ENCODE measurements at regions of chr1 and their contacts with region 1.

Region 1: GRCh38 chr1:89843281-89844121 is 22.7 kb downstream of the LRRC8D start:
- DNase-seq: peak; percentile 48 to 76
- ATAC-seq: peak; percentile 91 to 96 (median 94)
- H3K4me3 ChIP-seq: peak overlapping the region; percentile 58 to 86 (median 73)
- H3K27ac ChIP-seq: peak overlapping the region; percentile 15 to 89 (median 69)
- H3K4me1 ChIP-seq: peaks cover 0 to 39% (median 17%) of the 10 kb centered on the region in 9 donors
- H3K27me3 ChIP-seq: no peaks in the 10 kb centered on the region
- CTCF ChIP-seq: peak; percentile 52 to 86 (median 72)

Region 2: GRCh38 chr1:89780721-89781120 is 62.8 kb before region 1 on chr1:
- intact Hi-C with region 1: no loop called
- DNase-seq: no peak
- ATAC-seq: no peak
- H3K4me3 ChIP-seq: no peak overlapping the region
- H3K27ac ChIP-seq: no peak overlapping the region
- H3K4me1 ChIP-seq: no peaks in the 10 kb centered on the region
- H3K27me3 ChIP-seq: peaks cover 0 to 3% (median 0%) of the 10 kb centered on the region in 7 donors
- CTCF ChIP-seq: peak in 5 of 9 donors; percentile 6 to 36 (median 19)

Region 3: GRCh38 chr1:89804642-89805237 is 38.8 kb before region 1 on chr1:
- intact Hi-C with region 1: loop called in 3 of 10 experiments (anchors 5 kb)
- DNase-seq: peak; percentile 58 to 89
- ATAC-seq: peak; percentile 81 to 96 (median 91)
- H3K4me3 ChIP-seq: no peak overlapping the region
- H3K27ac ChIP-seq: no peak overlapping the region
- H3K4me1 ChIP-seq: peaks cover 0 to 5% (median 0%) of the 10 kb centered on the region in 9 donors
- H3K27me3 ChIP-seq: peaks cover 0 to 5% (median 0%) of the 10 kb centered on the region in 7 donors
- CTCF ChIP-seq: peak; percentile 85 to 97 (median 92)

Region 4: GRCh38 chr1:89820422-89821321 is 22.8 kb before region 1 on chr1 and contains the start of gene LRRC8D:
- intact Hi-C with region 1: loop called in 2 of 10 experiments (anchors 2 kb)
- DNase-seq: peak; percentile 86
- ATAC-seq: peak; percentile 95 to 99 (median 97)
- H3K4me3 ChIP-seq: peak within 1 kb of the TSS; percentile 79 to 96 (median 90)
- H3K27ac ChIP-seq: peak within 1 kb of the TSS in 9 of 10 donors; percentile 75 to 90 (median 82)
- H3K4me1 ChIP-seq: peaks cover 0 to 47% (median 32%) of the 10 kb centered on the region in 9 donors
- H3K27me3 ChIP-seq: no peaks in the 10 kb centered on the region
- CTCF ChIP-seq: peak in 1 of 9 donors; percentile 9
- total RNA-seq, gene LRRC8D: 5.1 to 8.2 (median 6.6) TPM

Region 5: DNA sequence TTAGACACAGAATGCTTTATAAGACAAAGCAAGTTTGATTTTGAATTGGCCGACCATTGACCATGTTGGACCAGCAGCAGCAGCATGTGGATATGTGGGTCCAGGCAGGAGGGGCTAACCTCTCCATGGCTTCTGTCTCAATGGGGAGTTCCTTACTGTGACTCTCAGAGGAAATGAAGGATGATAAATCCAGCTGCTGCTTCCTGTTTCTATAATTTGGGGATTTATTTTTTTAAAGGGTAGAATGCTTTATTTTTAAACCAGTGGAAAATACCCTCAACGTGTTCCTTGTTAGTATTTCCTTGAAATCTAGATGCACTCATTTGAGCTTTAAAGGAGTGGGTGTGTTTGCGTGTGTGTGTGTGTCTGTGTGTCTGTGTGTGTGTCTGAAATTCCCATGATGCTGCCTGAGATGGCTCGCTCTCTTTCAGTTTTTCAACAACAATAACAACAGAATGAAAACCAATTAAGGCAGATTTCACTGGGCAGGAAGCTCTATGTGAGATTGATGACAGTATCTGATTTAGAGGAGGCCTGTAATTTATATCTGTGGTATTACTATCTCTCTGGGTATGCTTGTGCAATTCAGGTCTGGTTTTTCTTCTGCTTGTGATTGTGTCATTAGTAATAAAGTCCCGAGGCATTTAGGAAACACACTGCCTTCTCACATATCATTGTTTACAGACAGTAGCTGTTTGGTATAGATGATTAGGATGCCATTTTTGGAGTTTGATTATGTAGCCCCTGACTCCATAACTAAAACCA is 65.4 kb after region 1 on chr1:
- intact Hi-C with region 1: loop called in 4 of 10 experiments (anchors 5 to 10 kb)
- DNase-seq: peak in 1 of 2 donors; percentile 54
- ATAC-seq: peak in 7 of 8 donors; percentile 54 to 83 (median 70)
- H3K4me3 ChIP-seq: peak overlapping the region in 2 of 10 donors; percentile 8
- H3K27ac ChIP-seq: peak overlapping the region in 9 of 10 donors; percentile 26 to 68 (median 58)
- H3K4me1 ChIP-seq: peaks cover 12 to 78% (median 66%) of the 10 kb centered on the region in 9 donors
- H3K27me3 ChIP-seq: no peaks in the 10 kb centered on the region
- CTCF ChIP-seq: no peak

Region 6: GRCh38 chr1:89987170-89987819 is 143.8 kb after region 1 on chr1:
- intact Hi-C with region 1: loop called in 6 of 10 experiments (anchors 1 to 10 kb)
- DNase-seq: peak in 1 of 2 donors; percentile 64
- ATAC-seq: peak; percentile 69 to 93 (median 90)
- H3K4me3 ChIP-seq: no peak overlapping the region
- H3K27ac ChIP-seq: no peak overlapping the region
- H3K4me1 ChIP-seq: peaks cover 0 to 18% (median 0%) of the 10 kb centered on the region in 9 donors
- H3K27me3 ChIP-seq: no peaks in the 10 kb centered on the region
- CTCF ChIP-seq: peak; percentile 74 to 92 (median 90)

Region 7: GRCh38 chr1:90104941-90105538 is 261.5 kb after region 1 on chr1:
- intact Hi-C with region 1: no loop called
- DNase-seq: no peak
- ATAC-seq: no peak
- H3K4me3 ChIP-seq: no peak overlapping the region
- H3K27ac ChIP-seq: no peak overlapping the region
- H3K4me1 ChIP-seq: no peaks in the 10 kb centered on the region
- H3K27me3 ChIP-seq: peaks cover 0 to 53% (median 19%) of the 10 kb centered on the region in 7 donors
- CTCF ChIP-seq: no peak

Region 8: GRCh38 chr1:90175490-90176170 is 332.1 kb after region 1 on chr1:
- intact Hi-C with region 1: no loop called
- DNase-seq: no peak
- ATAC-seq: no peak
- H3K4me3 ChIP-seq: no peak overlapping the region
- H3K27ac ChIP-seq: no peak overlapping the region
- H3K4me1 ChIP-seq: peaks cover 0 to 11% (median 0%) of the 10 kb centered on the region in 9 donors
- H3K27me3 ChIP-seq: no peaks in the 10 kb centered on the region
- CTCF ChIP-seq: no peak